H1 (cell line): ENCODE measurements at regions of chr6 and their contacts with region 1.

Region 1: GRCh38 chr6:31862344-31863227 is at the start of gene NEU1:
- DNase-seq: peak; percentile 97 to 99
- H3K4me3 ChIP-seq: peak within 1 kb of the TSS; percentile 73 to 96 (median 78)
- H3K27ac ChIP-seq: peak within 1 kb of the TSS; percentile 31; the same call in 1 of the 2 replicates
- H3K4me1 ChIP-seq: peaks cover 0 to 12% (median 0%) of the 10 kb centered on the region in 4 experiments; a peak in 4 of 7 replicates
- H3K27me3 ChIP-seq: 0 out of 7 replicates have a peak, but pooled peaks cover 0 to 3% (median 0%) of the 10 kb centered on the region in 4 experiments
- CTCF ChIP-seq: no peak
- EP300 ChIP-seq: no peak
- POLR2A ChIP-seq: peak; percentile 79 to 90
- RAD21 ChIP-seq: no peak
- total RNA-seq, gene NEU1: 41.2 and 43.4 TPM in 2 replicates

Region 2: GRCh38 chr6:31525932-31526591 is 336.5 kb before region 1 on chr6:
- CTCF ChIA-PET with region 1: no interaction called
- POLR2A ChIA-PET with region 1: no interaction called
- DNase-seq: no peak
- H3K4me3 ChIP-seq: no peak overlapping the region
- H3K27ac ChIP-seq: no peak overlapping the region; the same call in 1 of the 2 replicates
- H3K4me1 ChIP-seq: peaks cover 0 to 5% (median 3%) of the 10 kb centered on the region in 4 experiments; a peak in 3 of 7 replicates
- H3K27me3 ChIP-seq: no peaks in the 10 kb centered on the region
- CTCF ChIP-seq: no peak
- EP300 ChIP-seq: no peak
- POLR2A ChIP-seq: no peak
- RAD21 ChIP-seq: no peak

Region 3: GRCh38 chr6:31769684-31770371 is 92.8 kb before region 1 on chr6:
- CTCF ChIA-PET with region 1: interaction called, 12 read pairs
- POLR2A ChIA-PET with region 1: interaction called, 3 read pairs
- DNase-seq: peak; percentile 63 to 96
- H3K4me3 ChIP-seq: no peak overlapping the region
- H3K27ac ChIP-seq: no peak overlapping the region
- H3K4me1 ChIP-seq: peaks cover 0 to 5% (median under 1%) of the 10 kb centered on the region in 4 experiments; a peak in 4 of 7 replicates
- H3K27me3 ChIP-seq: no peaks in the 10 kb centered on the region
- CTCF ChIP-seq: peak in 2 of 3 experiments; percentile 85 to 95; a peak in 3 of 4 replicates
- EP300 ChIP-seq: no peak
- POLR2A ChIP-seq: no peak
- RAD21 ChIP-seq: peak; percentile 73 to 75

Region 4: DNA sequence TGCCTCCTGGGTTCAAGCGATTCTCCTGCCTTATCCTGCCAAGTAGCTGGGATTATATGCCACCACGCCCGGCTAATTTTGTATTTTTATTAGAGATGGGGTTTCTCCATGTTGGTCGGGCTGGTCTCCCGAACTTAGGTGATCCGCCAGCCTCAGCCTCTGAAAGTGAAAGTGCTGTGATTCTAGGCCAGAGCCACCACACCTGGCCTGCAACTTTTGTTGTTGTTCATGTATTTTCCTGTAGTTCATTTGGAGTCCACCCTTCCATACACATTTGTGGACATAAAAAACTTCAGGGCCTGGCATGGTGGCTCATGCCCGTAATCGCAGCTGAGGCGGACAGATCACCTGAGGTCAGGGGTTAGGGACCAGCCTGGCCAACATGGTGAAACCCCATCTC is 20.5 kb before region 1 on chr6:
- CTCF ChIA-PET with region 1: interaction called, 3 read pairs
- POLR2A ChIA-PET with region 1: interaction called, 93 read pairs
- DNase-seq: no peak
- H3K4me3 ChIP-seq: no peak overlapping the region
- H3K27ac ChIP-seq: no peak overlapping the region
- H3K4me1 ChIP-seq: peaks cover 2 to 8% (median 5%) of the 10 kb centered on the region in 4 experiments; a peak in 4 of 7 replicates
- H3K27me3 ChIP-seq: no peaks in the 10 kb centered on the region
- CTCF ChIP-seq: no peak
- EP300 ChIP-seq: no peak
- POLR2A ChIP-seq: no peak
- RAD21 ChIP-seq: no peak

Region 5: GRCh38 chr6:31851485-31851832 is 11.1 kb before region 1 on chr6:
- CTCF ChIA-PET with region 1: interaction called, 4 read pairs
- POLR2A ChIA-PET with region 1: interaction called, 93 read pairs
- DNase-seq: no peak
- H3K4me3 ChIP-seq: no peak overlapping the region
- H3K27ac ChIP-seq: no peak overlapping the region
- H3K4me1 ChIP-seq: no peaks in the 10 kb centered on the region
- H3K27me3 ChIP-seq: no peaks in the 10 kb centered on the region
- CTCF ChIP-seq: no peak
- EP300 ChIP-seq: no peak
- POLR2A ChIP-seq: no peak
- RAD21 ChIP-seq: no peak

Region 6: DNA sequence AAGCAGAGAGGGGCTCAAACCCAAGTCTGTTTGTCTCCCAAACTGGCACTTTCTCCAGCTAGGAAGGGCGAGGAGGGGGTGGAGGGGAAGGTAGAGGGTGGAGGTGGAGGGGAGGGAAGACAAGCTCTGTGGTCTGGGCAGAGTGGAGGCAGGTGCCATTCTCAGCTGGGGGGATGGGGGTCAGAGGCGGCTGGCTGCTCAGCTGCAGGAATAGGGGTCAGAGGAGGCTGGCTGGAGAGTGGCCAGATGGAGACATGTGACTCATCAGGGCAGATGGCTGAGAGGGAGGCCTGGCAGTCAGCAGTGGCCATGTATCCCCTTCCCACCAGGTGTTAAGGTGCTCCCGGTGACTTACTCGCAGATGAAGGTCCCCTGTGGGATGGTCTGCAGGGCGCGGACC is 19.8 kb after region 1 on chr6:
- CTCF ChIA-PET with region 1: interaction called, 25 read pairs
- POLR2A ChIA-PET with region 1: interaction called, 47 read pairs
- DNase-seq: no peak
- H3K4me3 ChIP-seq: no peak overlapping the region
- H3K27ac ChIP-seq: no peak overlapping the region
- H3K4me1 ChIP-seq: peaks cover 0 to 11% (median 0%) of the 10 kb centered on the region in 4 experiments; a peak in 1 of 7 replicates
- H3K27me3 ChIP-seq: no peaks in the 10 kb centered on the region
- CTCF ChIP-seq: no peak
- EP300 ChIP-seq: no peak
- POLR2A ChIP-seq: no peak
- RAD21 ChIP-seq: no peak

Region 7: GRCh38 chr6:31888276-31889258 is 26.0 kb after region 1 on chr6:
- CTCF ChIA-PET with region 1: interaction called, 25 read pairs
- POLR2A ChIA-PET with region 1: interaction called, 7 read pairs
- DNase-seq: peak in 1 of 2 experiments; percentile 89
- H3K4me3 ChIP-seq: no peak overlapping the region
- H3K27ac ChIP-seq: no peak overlapping the region; the same call in 1 of the 2 replicates
- H3K4me1 ChIP-seq: no peaks in the 10 kb centered on the region
- H3K27me3 ChIP-seq: no peaks in the 10 kb centered on the region
- CTCF ChIP-seq: peak in 2 of 3 experiments; percentile 72 to 75; a peak in 3 of 4 replicates
- EP300 ChIP-seq: no peak
- POLR2A ChIP-seq: no peak
- RAD21 ChIP-seq: peak; percentile 50 to 70

Region 8: GRCh38 chr6:31897612-31898382 is 35.2 kb after region 1 on chr6 and contains the start of gene EHMT2:
- CTCF ChIA-PET with region 1: no interaction called
- POLR2A ChIA-PET with region 1: interaction called, 40 read pairs
- DNase-seq: peak in 1 of 2 experiments; percentile 89
- H3K4me3 ChIP-seq: peak within 1 kb of the TSS; percentile 74 to 97 (median 82)
- H3K27ac ChIP-seq: peak within 1 kb of the TSS; percentile 55; the same call in 1 of the 2 replicates
- H3K4me1 ChIP-seq: peaks cover 0 to 14% (median 6%) of the 10 kb centered on the region in 4 experiments; a peak in 6 of 7 replicates
- H3K27me3 ChIP-seq: no peaks in the 10 kb centered on the region
- CTCF ChIP-seq: no peak
- EP300 ChIP-seq: no peak
- POLR2A ChIP-seq: peak; percentile 72 to 84
- RAD21 ChIP-seq: no peak
- total RNA-seq, gene EHMT2: 177 and 183 TPM in 2 replicates